ENCODE measurements at regions of chr10 and their contacts with region 1.

Region 1: GRCh38 chr10:93680412-93681047 is 21.9 kb downstream of the FRA10AC1 start:
- DNase-seq: no peak

Region 2: DNA sequence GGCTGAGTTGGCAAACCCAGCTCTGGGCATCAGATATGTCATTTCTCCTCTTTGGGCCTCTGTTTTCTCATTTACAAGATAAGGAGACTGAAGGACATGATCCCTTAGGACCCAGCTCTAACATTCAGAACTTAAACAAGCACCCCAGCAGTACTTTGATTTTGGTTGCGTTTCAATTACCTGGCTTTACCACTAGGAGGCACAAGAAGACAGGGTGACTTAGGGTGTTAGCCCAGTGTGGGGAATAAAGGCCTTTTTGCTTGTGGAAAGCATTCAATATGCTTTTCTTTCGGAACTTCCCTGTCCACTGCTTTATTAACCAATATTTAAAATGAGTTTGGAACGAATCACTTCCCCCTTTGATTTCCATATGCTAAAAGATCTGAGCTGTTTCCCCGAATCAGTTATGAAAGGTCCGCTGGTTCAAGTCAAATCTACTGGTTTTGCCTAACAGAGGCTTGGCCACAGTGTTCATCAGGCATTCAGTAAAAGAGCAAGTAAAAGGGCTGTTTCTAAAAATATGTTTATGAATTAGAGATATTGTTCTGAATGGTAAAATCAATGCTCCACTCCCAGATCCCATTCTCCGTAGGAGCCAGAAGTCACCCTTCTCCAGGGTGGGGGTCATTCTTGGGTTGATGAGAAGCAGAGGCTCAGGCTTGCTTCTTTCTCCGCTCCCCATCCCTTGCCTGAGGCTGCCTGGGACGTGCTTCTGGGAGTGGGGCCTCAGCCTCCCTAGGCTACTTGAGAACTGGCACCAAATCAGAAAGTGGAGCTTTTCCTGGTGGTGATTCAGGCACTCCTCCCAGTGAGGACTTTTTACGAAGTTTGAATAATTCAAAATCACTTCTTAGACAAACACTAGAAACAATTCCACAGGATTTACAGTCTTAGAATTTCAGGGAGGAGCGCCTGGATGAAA is 303.9 kb before region 1 on chr10:
- intact Hi-C with region 1: loop called (anchors 2 kb)
- DNase-seq: peak in 2 of 10 donors; percentile 21 to 23

Region 3: DNA sequence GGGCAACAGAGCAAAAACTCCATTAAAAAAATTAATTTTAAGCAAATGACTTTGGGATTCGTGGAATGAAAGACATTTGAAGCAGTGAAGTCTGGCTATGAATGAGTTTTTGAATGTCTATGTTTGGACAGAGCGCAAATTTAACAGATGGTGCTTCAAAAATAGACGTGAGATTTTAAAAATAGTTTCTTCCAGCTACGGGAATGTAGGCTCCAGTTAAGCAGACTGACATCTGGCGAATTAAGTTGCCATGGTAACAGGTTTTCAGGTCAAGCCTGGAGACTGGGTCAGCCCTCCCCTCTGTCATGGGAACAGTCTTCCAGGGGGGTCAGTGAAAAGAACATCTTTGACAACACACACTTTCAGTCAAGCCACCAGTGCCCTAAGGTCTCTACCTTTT is 260.4 kb before region 1 on chr10:
- intact Hi-C with region 1: no loop called
- DNase-seq: peak in 1 of 10 donors; percentile 27

Region 4: DNA sequence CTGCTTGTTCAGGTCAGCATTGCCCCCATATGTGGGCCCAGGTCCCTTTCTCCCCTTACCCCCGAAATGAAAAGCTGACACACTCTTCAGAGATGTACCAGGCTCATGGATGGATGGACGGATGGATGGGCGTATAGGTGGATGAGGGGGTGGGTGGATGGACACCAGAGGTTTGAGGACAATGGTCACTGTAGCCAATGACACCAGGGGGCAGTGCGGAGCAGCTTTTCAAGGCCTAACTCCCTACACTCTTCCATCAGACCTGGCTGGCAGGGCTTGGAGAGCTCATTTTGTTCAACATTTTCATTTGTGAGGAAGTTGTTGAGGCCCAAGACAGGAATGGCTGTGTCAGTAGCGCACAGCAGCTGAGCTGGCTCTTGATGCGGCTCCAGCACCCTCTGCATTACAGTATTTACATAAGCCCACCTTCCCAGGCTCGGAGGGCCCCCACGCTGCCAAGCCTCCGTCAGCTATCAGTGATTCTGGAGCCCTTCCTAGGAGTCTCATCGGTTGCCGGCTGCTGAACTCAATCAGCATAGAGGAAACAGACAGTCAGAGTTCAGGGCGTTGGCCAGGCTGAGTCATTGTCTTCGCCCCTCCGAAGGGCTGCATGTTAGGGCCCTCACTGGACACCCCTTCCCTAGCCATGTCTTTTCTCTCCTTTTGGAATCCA is 125.6 kb before region 1 on chr10:
- intact Hi-C with region 1: loop called (anchors 1 kb)
- DNase-seq: peak in 7 of 10 donors; percentile 44 to 92 (median 61)

Measured in posterior cingulate gyrus (tissue), 11 donors.